GM10248 (cell line): ENCODE measurements at regions of chr15 and their contacts with region 1.

Region 1: GRCh38 chr15:45037936-45038335 is 14.9 kb downstream of the SORD start:
- DNase-seq: no peak
- CTCF ChIP-seq: no peak

Region 2: DNA sequence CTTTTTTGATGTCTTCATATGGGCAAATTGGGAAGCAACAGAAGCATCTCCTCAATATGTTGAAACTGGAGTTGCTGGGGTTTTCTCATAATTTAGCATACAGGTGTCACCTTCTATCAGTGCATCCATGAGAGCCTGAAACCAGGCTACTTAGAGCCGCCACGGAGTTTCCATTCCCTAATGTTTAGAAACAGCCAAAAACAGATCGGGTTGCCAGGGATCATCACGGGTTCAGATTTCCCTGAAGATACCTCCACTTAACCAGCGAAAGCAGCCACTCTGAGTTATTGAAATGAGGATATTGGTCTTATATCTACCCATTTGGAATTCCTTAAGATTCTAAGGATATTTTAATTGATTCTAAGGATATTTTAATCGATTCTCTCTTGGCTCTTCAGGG is 66.9 kb before region 1 on chr15:
- CTCF ChIA-PET with region 1: interaction called, 27 read pairs
- POLR2A ChIA-PET with region 1: interaction called, 3 read pairs
- DNase-seq: no peak
- CTCF ChIP-seq: no peak

Region 3: DNA sequence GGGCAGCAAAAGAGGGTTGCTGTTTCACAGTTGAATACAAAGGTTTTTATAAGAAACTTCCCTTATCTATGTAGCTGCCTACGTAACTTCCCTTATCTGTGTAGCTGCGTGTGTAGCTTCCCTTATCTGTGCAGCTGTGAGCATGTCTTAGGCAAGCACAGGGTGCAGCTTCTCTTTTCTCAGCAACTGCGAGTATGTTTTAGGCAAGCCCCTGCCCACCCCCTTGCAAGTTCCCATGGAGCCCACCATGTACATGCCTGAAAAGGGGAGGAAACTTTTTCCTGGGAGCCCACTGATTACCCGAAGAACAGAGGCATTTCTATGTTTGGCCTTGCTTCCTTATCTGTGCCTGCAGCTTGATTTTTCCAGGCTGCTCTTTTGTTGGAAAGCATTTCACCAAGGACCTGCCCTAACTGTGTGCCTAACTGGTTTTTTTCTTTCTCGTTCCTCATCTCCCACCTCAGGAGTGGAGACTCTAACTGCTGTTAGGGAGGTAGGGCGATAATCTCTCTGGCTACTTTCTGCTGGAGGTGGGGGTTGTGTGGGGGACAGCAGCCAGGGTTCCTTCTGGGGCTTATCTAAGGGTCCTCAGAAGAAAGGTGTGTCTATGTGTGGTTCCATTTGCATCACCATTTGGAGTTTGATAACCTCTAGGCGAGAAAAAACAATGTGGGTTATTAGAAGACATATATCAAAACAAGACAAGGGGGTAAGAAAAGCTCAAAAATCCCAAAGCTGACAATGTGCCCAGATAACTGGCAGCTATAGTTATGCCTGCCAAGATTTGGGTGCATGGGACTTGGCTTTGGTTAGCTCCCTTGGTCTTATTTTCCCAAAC is 11.1 kb after region 1 on chr15:
- CTCF ChIA-PET with region 1: interaction called, 11 read pairs
- POLR2A ChIA-PET with region 1: no interaction called
- DNase-seq: peak; percentile 39
- CTCF ChIP-seq: no peak